Head of caudate nucleus (tissue), 42 donors: ENCODE measurements at regions of chr20 and their contacts with region 1.

Region 1: DNA sequence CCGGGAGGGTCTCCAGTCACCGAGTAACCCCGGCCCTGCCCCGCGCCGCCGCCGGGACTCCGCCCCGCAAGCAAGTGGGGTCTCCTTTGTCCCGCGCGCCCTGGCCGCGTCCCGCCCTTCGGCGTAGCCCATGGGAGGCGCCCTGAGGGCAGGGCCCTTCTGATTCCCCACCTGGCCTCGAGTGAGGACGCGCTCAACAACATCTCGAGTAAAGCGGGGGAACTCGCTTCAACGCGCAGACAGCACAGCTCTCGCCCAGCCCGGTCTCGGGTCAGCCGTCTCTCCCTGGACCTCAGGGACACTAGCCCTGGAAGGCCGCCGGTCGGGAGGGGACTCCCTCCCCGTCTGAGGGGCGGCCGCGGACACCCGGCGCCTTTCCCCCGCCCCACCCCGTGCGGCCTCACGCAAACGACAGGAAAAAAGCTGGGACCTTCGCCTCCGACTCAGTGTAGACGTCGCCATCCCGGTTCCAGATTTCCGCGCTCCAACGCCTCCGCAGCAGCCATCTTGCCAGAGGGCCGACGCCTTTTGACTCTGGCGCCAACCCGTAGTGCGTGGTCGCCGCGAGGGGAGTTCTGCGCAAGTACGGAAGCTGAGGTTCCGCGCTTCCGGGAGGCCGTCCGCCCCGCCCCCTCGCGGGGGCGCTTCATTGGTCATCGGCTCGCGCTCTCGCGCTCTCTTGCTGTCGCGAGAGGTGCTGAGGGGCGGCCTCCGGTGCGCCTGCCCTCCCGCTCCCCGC is 412 bp upstream of the GID8 start:
- DNase-seq: peak; percentile 76 to 98 (median 93)

Region 2: GRCh38 chr20:62926239-62927104 is 11.1 kb before region 1 on chr20 and contains the start of gene DIDO1:
- intact Hi-C with region 1: loop called (anchors 1 kb)
- DNase-seq: peak; percentile 74 to 96 (median 92)

Region 3: GRCh38 chr20:63330940-63331339 is 393.4 kb after region 1 on chr20:
- intact Hi-C with region 1: no loop called
- DNase-seq: no peak